Gastrocnemius medialis (tissue), 4 donors: ENCODE measurements at regions of chr6 and their contacts with region 1.

Region 1: GRCh38 chr6:17987576-17988421 is at the start of gene KIF13A:
- DNase-seq: peak; percentile 55 to 67
- ATAC-seq: peak; percentile 66 to 68
- H3K4me3 ChIP-seq: peak within 1 kb of the TSS; percentile 68 to 91 (median 86)
- H3K27ac ChIP-seq: peak within 1 kb of the TSS; percentile 91 to 99 (median 94)
- H3K4me1 ChIP-seq: peaks cover 22 to 36% of the 10 kb centered on the region in 2 donors
- H3K27me3 ChIP-seq: no peaks in the 10 kb centered on the region
- CTCF ChIP-seq: peak; percentile 21 to 54 (median 45)
- POLR2A ChIP-seq: peak; percentile 63 to 78
- total RNA-seq, gene KIF13A: 47.4 to 72.9 (median 63.8) TPM

Region 2: GRCh38 chr6:17599885-17600526 is 387.8 kb before region 1 on chr6 and contains the start of gene FAM8A1:
- in situ Hi-C with region 1: no loop called
- intact Hi-C with region 1: loop called (anchors 5 kb)
- DNase-seq: peak; percentile 95 to 97
- ATAC-seq: peak; percentile 93 to 96
- H3K4me3 ChIP-seq: peak within 1 kb of the TSS; percentile 77 to 98 (median 86)
- H3K27ac ChIP-seq: peak within 1 kb of the TSS; percentile 89 to 99 (median 94)
- H3K4me1 ChIP-seq: peaks cover 11 to 13% of the 10 kb centered on the region in 2 donors
- H3K27me3 ChIP-seq: no peaks in the 10 kb centered on the region
- CTCF ChIP-seq: peak; percentile 60 to 75 (median 69)
- POLR2A ChIP-seq: peak; percentile 84 to 85
- total RNA-seq, gene FAM8A1: 22.7 to 37.3 (median 27.5) TPM

Region 3: DNA sequence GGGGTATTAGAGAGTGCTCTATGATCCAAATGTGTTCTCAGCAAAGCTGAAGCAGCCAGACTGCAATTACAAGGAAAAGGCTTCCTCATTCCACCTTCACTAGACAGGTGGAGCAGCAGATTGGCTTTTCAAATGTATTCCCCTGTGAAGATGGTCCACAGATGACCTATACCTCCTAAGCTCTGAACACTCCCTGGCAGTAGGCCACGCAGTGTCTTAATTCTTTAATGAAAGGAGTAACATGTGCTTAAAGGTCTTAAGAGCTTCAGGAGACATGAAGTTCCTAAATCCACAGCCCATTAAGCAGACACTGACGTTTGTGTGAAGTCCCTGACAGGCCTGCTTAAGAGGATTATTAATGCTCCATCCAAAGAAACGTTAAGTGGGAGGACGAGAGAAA is 142.2 kb before region 1 on chr6:
- in situ Hi-C with region 1: loop called in 1 of 4 experiments (anchors 25 kb)
- intact Hi-C with region 1: loop called (anchors 5 kb)
- DNase-seq: no peak
- ATAC-seq: peak; percentile 30 to 58
- H3K4me3 ChIP-seq: no peak overlapping the region
- H3K27ac ChIP-seq: peak overlapping the region in 2 of 4 donors; percentile 1 to 41
- H3K4me1 ChIP-seq: no peaks in the 10 kb centered on the region
- H3K27me3 ChIP-seq: no peaks in the 10 kb centered on the region
- CTCF ChIP-seq: peak in 2 of 5 experiments; percentile 6 to 28
- POLR2A ChIP-seq: no peak

Region 4: DNA sequence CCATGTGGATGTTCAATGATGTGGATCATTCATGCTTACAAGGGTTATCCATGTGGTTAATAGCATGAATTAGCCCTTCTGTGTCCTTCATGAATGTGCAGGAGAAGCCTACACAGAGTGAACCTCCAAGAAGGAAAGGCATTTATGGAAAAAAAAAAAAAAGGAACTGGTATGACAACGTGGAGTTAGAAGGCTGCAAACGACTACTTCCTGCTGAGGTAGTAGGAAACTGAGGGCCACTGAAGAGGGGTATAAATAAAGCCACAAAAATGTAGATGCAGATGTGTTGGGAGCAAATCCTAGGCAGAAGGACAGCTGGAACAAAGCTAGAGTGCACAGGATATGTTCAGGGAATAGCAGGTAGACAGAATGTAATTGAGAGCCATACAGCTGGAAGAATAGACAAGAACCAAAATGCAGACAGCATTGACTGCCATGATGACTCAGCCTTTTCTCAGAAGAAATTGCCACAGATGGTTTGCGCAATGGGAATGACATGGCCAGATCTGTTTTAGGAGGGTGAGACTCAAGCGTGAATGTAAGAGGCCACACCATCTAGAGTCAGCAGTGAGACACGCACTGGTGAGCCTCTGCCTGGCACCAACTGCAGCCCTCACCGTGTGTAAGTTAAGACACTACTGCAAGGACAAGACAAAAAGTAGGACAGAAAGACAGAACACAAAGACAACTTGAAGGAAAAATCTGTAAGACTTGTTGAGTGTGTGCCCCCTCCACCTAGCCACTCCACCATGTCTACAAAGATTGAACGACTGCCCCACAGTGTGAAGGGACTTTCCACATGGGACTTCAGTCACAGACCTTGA is 80.2 kb before region 1 on chr6:
- in situ Hi-C with region 1: loop called in 1 of 4 experiments (anchors 5 kb)
- intact Hi-C with region 1: loop called (anchors 5 kb)
- DNase-seq: peak; percentile 94 to 96
- ATAC-seq: peak; percentile 93
- H3K4me3 ChIP-seq: peak overlapping the region in 1 of 4 donors; percentile 23
- H3K27ac ChIP-seq: peak overlapping the region; percentile 88 to 94 (median 89)
- H3K4me1 ChIP-seq: peaks cover 85 to 87% of the 10 kb centered on the region in 2 donors
- H3K27me3 ChIP-seq: no peaks in the 10 kb centered on the region
- CTCF ChIP-seq: peak in 1 of 5 experiments; percentile 19
- POLR2A ChIP-seq: peak in 1 of 2 donors; percentile 44

Region 5: GRCh38 chr6:18122124-18123093 is 134.6 kb after region 1 on chr6 and contains the start of gene NHLRC1:
- in situ Hi-C with region 1: loop called in 2 of 4 experiments (anchors 5 to 10 kb)
- intact Hi-C with region 1: loop called (anchors 2 kb)
- DNase-seq: peak; percentile 85 to 90
- ATAC-seq: peak; percentile 97 to 98
- H3K4me3 ChIP-seq: peak within 1 kb of the TSS; percentile 62 to 97 (median 68)
- H3K27ac ChIP-seq: peak within 1 kb of the TSS; percentile 79 to 89 (median 86)
- H3K4me1 ChIP-seq: peaks cover 12 to 20% of the 10 kb centered on the region in 2 donors
- H3K27me3 ChIP-seq: no peaks in the 10 kb centered on the region
- CTCF ChIP-seq: peak; percentile 97 to 99 (median 98)
- POLR2A ChIP-seq: peak; percentile 68
- total RNA-seq, gene NHLRC1: 0.56 to 1.9 (median 1.4) TPM

Region 6: DNA sequence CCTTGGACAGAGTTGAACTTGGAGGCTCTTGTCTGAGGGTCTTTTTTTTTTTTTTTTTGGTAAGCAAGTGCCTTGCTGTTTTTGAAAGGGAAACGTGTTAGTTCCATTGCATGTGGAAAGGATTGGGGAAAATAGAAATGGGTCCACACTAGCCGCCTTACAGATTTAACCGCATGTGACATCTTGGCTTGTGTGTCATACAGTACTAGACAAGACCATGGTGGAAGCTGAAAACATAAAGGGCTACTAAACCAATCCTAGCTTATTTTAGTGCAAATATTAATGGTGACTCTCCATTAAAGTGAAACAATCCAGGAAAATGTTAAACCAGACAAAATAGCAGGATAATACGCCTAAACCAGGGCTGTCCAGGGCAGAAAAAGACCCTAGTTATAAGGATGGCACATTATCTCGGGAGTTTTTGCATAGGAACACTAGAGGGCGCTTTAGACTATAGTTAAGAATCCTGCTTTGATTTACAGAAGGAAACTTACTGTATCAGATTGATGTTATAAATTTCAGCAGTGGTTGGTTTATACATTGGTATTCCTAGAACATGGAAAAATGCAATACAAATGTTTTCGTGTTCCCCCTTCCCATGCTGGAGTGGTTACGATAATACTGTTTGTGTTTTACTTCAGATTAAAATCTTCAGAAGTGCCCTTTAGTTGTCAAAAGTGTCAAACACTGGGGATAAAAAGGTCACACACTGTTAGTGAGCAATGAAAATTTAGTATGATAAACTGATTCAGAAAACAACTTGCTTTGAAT is 336.3 kb after region 1 on chr6:
- in situ Hi-C with region 1: no loop called
- intact Hi-C with region 1: no loop called
- DNase-seq: no peak
- ATAC-seq: peak; percentile 62 to 83
- H3K4me3 ChIP-seq: no peak overlapping the region
- H3K27ac ChIP-seq: no peak overlapping the region
- H3K4me1 ChIP-seq: peaks cover 15 to 22% of the 10 kb centered on the region in 2 donors
- H3K27me3 ChIP-seq: no peaks in the 10 kb centered on the region
- CTCF ChIP-seq: peak; percentile 76 to 83 (median 80)
- POLR2A ChIP-seq: no peak